ENCODE measurements at regions of chr1 and their contacts with region 1.

Region 1: DNA sequence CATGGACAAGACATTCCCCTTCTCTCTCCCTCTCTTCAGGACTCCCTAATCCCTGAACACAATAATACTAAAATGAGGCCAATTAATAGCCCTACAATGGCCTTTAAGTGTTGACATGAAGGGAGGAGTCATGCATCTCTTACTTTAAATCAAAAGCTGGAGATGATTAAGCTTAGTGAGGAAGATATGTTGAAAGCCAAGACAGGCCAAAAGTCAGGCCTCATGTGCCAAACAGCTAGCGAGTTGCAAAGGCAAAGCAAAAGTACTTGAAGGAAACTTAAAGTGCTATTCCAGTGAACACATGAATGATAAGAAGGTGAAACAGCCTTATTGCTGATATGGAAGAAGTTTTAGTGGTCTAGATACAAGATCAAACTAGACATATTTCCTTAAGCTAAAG is 49.5 kb upstream of the CD46 start:
- DNase-seq: peak in 1 of 7 donors; percentile 10
- H3K4me3 ChIP-seq: no peak overlapping the region
- H3K27ac ChIP-seq: no peak overlapping the region
- H3K4me1 ChIP-seq: peaks cover 0 to 5% of the 10 kb centered on the region in 2 donors
- H3K27me3 ChIP-seq: no peaks in the 10 kb centered on the region
- CTCF ChIP-seq: no peak
- POLR2A ChIP-seq: no peak

Region 2: GRCh38 chr1:207797229-207797961 is 95.1 kb after region 1 on chr1:
- intact Hi-C with region 1: loop called in 1 of 2 experiments (anchors 10 kb)
- DNase-seq: peak; percentile 88 to 97 (median 93)
- H3K4me3 ChIP-seq: no peak overlapping the region
- H3K27ac ChIP-seq: peak overlapping the region in 3 of 5 donors; percentile 35 to 66 (median 41)
- H3K4me1 ChIP-seq: peaks cover 3 to 4% of the 10 kb centered on the region in 2 donors
- H3K27me3 ChIP-seq: no peaks in the 10 kb centered on the region
- CTCF ChIP-seq: peak; percentile 63 to 94 (median 82)
- POLR2A ChIP-seq: no peak

Measured in adrenal gland (tissue), 19 donors.